Left ventricle myocardium inferior (tissue), 1 donor: ENCODE measurements at regions of chr4 and their contacts with region 1.

Region 1: DNA sequence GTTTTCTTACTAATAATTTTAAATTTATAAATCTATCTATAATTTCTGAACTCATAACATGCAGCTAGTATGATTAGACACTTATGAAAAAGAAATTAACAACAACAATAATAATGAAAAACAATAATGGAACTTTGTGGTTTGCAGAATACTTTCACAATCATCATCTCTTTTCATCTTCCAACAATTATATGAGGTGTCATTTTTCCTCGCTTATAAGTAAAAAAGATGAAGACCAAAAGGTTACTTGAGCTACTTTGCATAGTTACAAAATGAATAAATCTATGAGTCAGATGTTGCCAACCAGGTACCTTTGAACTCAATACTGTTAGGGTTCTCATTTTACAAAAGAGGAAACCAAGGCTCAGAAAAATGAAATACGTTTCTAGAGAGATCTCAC is 98.5 kb upstream of the ELOVL6 start:
- DNase-seq: no peak
- H3K4me3 ChIP-seq: no peak overlapping the region
- H3K27ac ChIP-seq: no peak overlapping the region
- H3K4me1 ChIP-seq: no peaks in the 10 kb centered on the region
- H3K27me3 ChIP-seq: peaks cover 34% of the 10 kb centered on the region
- CTCF ChIP-seq: no peak

Region 2: DNA sequence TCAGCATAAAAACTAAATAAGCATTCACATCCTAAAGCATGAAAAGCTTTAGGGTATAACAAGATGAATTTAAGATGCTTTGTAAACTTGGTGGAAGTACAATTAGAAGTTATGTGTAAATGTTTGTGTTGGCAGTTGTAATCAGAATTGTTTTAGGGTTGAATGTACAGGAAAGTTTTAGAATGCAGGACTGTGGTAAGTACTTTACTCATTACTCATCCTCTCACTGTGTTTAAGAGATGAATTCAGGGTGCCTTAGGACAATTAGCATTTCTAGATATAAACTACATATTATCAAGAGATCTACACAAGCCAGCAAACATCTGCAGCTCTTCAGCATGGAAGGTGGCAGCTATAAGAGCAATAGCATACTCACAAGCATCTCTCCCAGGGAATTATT is 21.0 kb before region 1 on chr4:
- intact Hi-C with region 1: loop called (anchors 2 kb)
- DNase-seq: no peak
- H3K4me3 ChIP-seq: no peak overlapping the region
- H3K27ac ChIP-seq: no peak overlapping the region
- H3K4me1 ChIP-seq: no peaks in the 10 kb centered on the region
- H3K27me3 ChIP-seq: peaks cover 6% of the 10 kb centered on the region
- CTCF ChIP-seq: no peak

Region 3: DNA sequence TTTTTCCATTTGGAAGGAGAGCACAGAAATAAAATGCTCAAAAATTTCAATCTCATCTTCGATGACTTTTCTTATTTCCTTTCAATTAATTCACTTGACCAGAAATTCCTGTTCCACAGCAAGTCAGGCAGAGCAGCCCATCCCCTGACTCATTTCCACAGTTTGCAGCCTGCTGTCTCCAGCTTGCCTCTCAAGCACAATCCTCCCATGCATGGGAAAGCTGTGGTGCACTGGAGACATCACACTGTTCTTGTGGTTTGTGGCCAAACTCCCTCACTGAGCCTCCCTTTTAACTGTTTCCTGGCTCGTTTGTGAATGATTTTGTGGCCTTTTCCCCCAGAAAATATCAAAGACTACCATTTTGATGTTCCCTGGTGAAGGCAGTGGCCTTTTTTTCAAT is 65.0 kb after region 1 on chr4:
- intact Hi-C with region 1: no loop called
- DNase-seq: no peak
- H3K4me3 ChIP-seq: no peak overlapping the region
- H3K27ac ChIP-seq: no peak overlapping the region
- H3K4me1 ChIP-seq: no peaks in the 10 kb centered on the region
- H3K27me3 ChIP-seq: no peaks in the 10 kb centered on the region
- CTCF ChIP-seq: no peak